Caco-2 (cell line): ENCODE measurements at regions of chr1 and their contacts with region 1.

Region 1: GRCh38 chr1:45033356-45033755 is 21.3 kb downstream of the UROD start:
- DNase-seq: no peak
- H3K4me3 ChIP-seq: no peak overlapping the region
- H3K4me3 Mint-ChIP-seq: no peak overlapping the region
- H3K27ac Mint-ChIP-seq: no peak overlapping the region
- H3K4me1 ChIP-seq: no peaks in the 10 kb centered on the region
- H3K4me1 Mint-ChIP-seq: no peaks in the 10 kb centered on the region
- H3K27me3 ChIP-seq: no peaks in the 10 kb centered on the region
- H3K27me3 Mint-ChIP-seq: no peaks in the 10 kb centered on the region
- CTCF ChIP-seq: no peak

Region 2: DNA sequence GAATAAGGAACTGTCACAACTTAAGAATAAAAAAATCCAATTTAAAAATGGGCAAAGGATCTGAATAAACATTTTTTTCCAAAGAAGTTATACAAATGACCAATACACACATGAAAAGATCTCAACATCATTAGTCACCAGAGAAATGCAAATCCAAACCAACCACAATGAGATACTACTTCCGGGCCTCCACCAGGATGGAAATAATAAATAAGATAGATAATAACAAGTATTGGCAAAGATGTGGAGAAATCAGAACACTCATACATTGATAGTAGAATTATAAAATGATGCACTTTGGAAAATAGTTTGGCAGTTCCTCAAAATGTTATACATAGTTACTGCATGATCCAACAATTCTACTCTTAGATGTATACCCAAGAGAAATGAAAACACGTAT is 154.4 kb after region 1 on chr1:
- CTCF ChIA-PET with region 1: no interaction called
- POLR2A ChIA-PET with region 1: interaction called, 13 read pairs
- intact Hi-C with region 1: no loop called
- DNase-seq: no peak
- H3K4me3 ChIP-seq: no peak overlapping the region
- H3K4me3 Mint-ChIP-seq: no peak overlapping the region
- H3K27ac Mint-ChIP-seq: no peak overlapping the region
- H3K4me1 ChIP-seq: peaks cover 3% of the 10 kb centered on the region; the same call in 1 of the 2 replicates
- H3K4me1 Mint-ChIP-seq: no peaks in the 10 kb centered on the region
- H3K27me3 ChIP-seq: no peaks in the 10 kb centered on the region
- H3K27me3 Mint-ChIP-seq: no peaks in the 10 kb centered on the region
- CTCF ChIP-seq: no peak